ENCODE measurements at regions of chr5 and their contacts with region 1.

Region 1: DNA sequence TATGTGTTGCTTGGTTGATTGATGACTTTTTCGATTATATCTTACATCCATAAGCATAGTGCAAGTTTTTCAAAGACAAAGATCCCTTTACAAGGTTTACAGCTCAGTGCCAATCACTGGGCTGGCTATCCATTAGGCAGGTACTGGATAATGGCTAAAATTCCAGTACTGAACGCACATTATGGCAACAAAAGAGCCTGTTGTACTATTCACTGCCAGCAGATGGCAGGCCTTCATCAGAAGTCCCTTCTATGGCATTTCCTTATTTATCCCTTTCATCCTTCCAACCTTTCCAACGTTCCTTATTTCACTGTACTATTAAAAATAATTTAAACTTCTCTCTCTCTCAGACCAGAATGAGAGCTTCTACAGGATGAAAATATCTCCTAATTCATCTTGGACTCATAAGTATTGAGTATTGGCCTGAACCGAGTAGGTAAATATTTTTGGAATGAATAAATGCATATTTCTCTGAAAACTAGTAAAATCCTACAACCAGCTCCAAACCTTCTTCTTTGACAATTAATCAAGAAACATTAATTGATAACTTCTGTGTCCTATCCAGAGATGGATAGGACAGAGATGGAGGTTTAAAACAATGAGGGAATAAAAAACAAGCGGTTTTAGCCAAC is 6.7 kb upstream of the WNT8A start:
- DNase-seq: peak; percentile 70
- ATAC-seq: no peak
- H3K4me3 Mint-ChIP-seq: no peak overlapping the region
- H3K27ac Mint-ChIP-seq: no peak overlapping the region
- H3K4me1 Mint-ChIP-seq: peaks cover 15% of the 10 kb centered on the region
- H3K27me3 Mint-ChIP-seq: no peaks in the 10 kb centered on the region

Region 2: GRCh38 chr5:138065102-138065501 is 12.1 kb before region 1 on chr5:
- CTCF ChIA-PET with region 1: interaction called, 22 read pairs
- POLR2A ChIA-PET with region 1: no interaction called
- intact Hi-C with region 1: no loop called
- DNase-seq: peak; percentile 40
- ATAC-seq: no peak
- H3K4me3 Mint-ChIP-seq: no peak overlapping the region
- H3K27ac Mint-ChIP-seq: no peak overlapping the region
- H3K4me1 Mint-ChIP-seq: peaks cover 4% of the 10 kb centered on the region
- H3K27me3 Mint-ChIP-seq: no peaks in the 10 kb centered on the region

Region 3: DNA sequence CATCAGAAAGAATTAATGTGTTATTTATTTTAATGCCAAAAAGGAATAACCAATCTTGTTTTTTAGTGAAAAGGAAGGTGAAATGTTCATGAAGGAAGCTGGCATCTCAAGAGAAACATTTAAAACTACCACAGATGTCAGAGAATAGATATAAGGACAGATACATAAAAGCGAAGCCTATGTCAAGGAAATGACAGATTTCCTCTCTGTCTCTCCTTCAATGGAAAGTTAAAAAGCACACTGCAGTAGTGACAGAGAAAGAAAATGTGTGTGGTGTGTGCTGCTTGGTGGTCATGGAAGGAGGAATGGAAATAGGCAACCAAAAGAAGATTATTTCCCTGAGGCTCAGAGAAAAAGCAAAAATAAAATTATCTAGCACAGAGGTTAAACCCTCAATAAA is 15.9 kb after region 1 on chr5:
- CTCF ChIA-PET with region 1: interaction called, 54 read pairs
- POLR2A ChIA-PET with region 1: no interaction called
- intact Hi-C with region 1: no loop called
- DNase-seq: no peak
- ATAC-seq: no peak
- H3K4me3 Mint-ChIP-seq: no peak overlapping the region
- H3K27ac Mint-ChIP-seq: no peak overlapping the region
- H3K4me1 Mint-ChIP-seq: peaks cover 43% of the 10 kb centered on the region
- H3K27me3 Mint-ChIP-seq: no peaks in the 10 kb centered on the region